ENCODE measurements at regions of chr21 and their contacts with region 1.

Region 1: DNA sequence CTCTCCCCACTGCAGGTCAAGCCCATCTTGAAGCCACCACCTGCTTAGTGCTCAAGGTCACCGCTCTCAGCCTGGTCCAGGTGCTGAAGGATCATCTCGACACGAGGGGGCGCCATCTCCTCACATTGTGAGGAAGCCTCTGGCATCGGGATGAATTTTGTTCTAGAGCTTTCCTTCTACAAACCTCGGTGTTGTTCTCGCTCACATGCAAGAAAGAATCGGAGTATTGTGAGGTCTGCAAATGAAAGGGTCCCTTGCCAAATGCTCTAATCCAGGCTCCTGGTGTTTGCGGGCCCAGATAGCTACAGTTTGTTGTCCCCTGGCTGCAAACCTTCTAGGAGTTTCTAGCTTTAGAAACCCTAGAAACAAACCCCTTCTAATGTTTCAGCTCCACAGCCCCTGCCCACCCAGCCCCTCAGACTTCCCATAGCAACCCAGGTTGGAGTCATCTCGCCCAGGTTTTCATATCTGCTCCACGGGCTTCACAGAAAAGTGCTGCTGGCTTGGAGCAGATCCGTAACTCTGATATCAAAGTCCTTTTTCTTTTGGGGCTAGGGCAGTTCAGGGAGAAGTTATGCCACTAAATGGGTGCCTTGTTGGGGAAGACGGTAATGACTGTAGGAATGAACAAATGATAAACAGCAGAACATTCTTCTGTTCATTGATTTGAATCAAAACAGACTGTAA is 8.6 kb upstream of the ATP5PO start:
- DNase-seq: peak; percentile 92
- ATAC-seq: peak; percentile 94
- H3K4me3 Mint-ChIP-seq: no peak overlapping the region
- H3K27ac Mint-ChIP-seq: no peak overlapping the region
- H3K4me1 Mint-ChIP-seq: peaks cover 11% of the 10 kb centered on the region
- H3K27me3 Mint-ChIP-seq: peaks cover 4% of the 10 kb centered on the region

Region 2: GRCh38 chr21:33940164-33940880 is 16.1 kb after region 1 on chr21:
- POLR2A ChIA-PET with region 1: no interaction called
- DNase-seq: no peak
- ATAC-seq: no peak
- H3K4me3 Mint-ChIP-seq: no peak overlapping the region
- H3K27ac Mint-ChIP-seq: no peak overlapping the region
- H3K4me1 Mint-ChIP-seq: peaks cover 39% of the 10 kb centered on the region
- H3K27me3 Mint-ChIP-seq: no peaks in the 10 kb centered on the region

Region 3: DNA sequence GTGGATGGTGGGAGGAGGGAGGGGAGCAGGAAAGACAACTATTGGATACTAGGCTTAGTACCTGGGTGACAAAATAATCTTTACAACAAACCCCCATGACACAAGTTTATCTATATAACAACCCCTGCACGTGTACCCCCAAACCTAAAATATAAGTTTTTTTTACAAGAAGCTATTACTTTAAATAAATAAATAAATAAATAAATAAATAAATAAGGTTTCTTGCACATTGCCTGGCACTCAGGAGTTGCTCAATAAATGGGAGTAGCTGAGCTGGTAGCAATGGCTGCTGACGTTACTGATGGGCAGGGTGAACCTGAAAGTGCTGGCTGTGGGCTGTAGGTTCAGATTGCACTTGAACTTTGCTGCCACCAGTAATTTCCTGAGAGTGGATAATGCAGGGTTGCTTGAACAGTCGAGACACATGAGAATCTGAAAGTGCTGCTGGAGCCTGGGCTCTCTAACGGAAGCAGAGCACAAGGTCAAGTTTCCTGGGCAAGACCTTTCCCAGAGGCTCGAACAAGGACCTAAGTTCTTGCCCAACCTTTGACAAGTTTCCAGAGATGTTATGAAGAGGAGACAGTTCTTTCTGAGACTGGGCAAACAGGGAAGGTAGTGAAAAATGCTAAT is 424.8 kb after region 1 on chr21:
- POLR2A ChIA-PET with region 1: interaction called, 16 read pairs
- DNase-seq: no peak
- ATAC-seq: no peak
- H3K4me3 Mint-ChIP-seq: no peak overlapping the region
- H3K27ac Mint-ChIP-seq: no peak overlapping the region
- H3K4me1 Mint-ChIP-seq: peaks cover 6% of the 10 kb centered on the region
- H3K27me3 Mint-ChIP-seq: peaks cover 2% of the 10 kb centered on the region